Mammary epithelial cell (primary cell): ENCODE measurements at regions of chr6 and their contacts with region 1.

Region 1: GRCh38 chr6:35731736-35732532 is 4.9 kb upstream of the ARMC12 start:
- DNase-seq: peak; percentile 87
- H3K4me3 ChIP-seq: peak overlapping the region; percentile 45 to 54 (median 48)
- H3K27ac ChIP-seq: peak overlapping the region; percentile 83
- H3K4me1 ChIP-seq: peaks cover 69% of the 10 kb centered on the region
- H3K27me3 ChIP-seq: no peaks in the 10 kb centered on the region
- CTCF ChIP-seq: no peak

Region 2: DNA sequence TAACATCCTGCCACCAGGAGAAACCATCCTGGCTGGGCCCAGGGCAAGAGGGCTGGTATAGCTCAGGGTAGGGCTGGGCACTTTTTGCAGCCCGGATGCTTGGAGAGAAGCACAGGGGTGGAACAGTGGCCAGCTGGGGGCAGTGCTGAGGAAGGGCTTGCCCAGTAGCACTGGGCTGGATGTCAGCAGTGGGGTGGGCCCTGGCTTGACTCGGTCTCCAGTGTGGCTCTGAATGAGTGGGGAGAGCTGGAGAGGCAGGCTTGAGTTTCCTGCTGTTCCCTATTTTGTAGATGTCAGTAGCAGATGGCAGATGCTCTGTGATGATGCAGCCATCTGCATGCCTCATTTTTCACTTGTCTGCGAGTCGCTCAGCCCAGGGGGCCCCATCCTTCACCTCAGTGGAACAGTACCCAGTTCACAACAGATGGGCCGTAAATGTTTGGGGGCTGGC is 162.9 kb before region 1 on chr6:
- CTCF ChIA-PET with region 1: interaction called, 3 read pairs
- dilution Hi-C with region 1: no loop called
- in situ Hi-C with region 1: no loop called
- intact Hi-C with region 1: loop called (anchors 5 kb)
- DNase-seq: peak; percentile 23
- H3K4me3 ChIP-seq: no peak overlapping the region
- H3K27ac ChIP-seq: no peak overlapping the region
- H3K4me1 ChIP-seq: no peaks in the 10 kb centered on the region
- H3K27me3 ChIP-seq: no peaks in the 10 kb centered on the region
- CTCF ChIP-seq: peak; percentile 41 to 54

Region 3: GRCh38 chr6:35601331-35602132 is 130.4 kb before region 1 on chr6:
- CTCF ChIA-PET with region 1: interaction called, 4 read pairs
- dilution Hi-C with region 1: no loop called
- in situ Hi-C with region 1: no loop called
- intact Hi-C with region 1: loop called (anchors 5 kb)
- DNase-seq: peak; percentile 84
- H3K4me3 ChIP-seq: peak overlapping the region in 2 of 3 experiments; percentile 39 to 41
- H3K27ac ChIP-seq: peak overlapping the region; percentile 96
- H3K4me1 ChIP-seq: peaks cover 67% of the 10 kb centered on the region
- H3K27me3 ChIP-seq: no peaks in the 10 kb centered on the region
- CTCF ChIP-seq: no peak

Region 4: GRCh38 chr6:35688581-35689322 is 43.2 kb before region 1 on chr6 and contains the start of gene FKBP5:
- CTCF ChIA-PET with region 1: interaction called, 3 read pairs
- dilution Hi-C with region 1: loop called (anchors 5 kb)
- in situ Hi-C with region 1: loop called (anchors 5 kb)
- intact Hi-C with region 1: loop called (anchors 1 kb)
- DNase-seq: peak; percentile 89
- H3K4me3 ChIP-seq: peak within 1 kb of the TSS; percentile 65 to 94 (median 92)
- H3K27ac ChIP-seq: peak within 1 kb of the TSS; percentile 91
- H3K4me1 ChIP-seq: peaks cover 9% of the 10 kb centered on the region
- H3K27me3 ChIP-seq: no peaks in the 10 kb centered on the region
- CTCF ChIP-seq: no peak
- total RNA-seq, gene FKBP5: 60.7 to 97.9 TPM

Region 5: DNA sequence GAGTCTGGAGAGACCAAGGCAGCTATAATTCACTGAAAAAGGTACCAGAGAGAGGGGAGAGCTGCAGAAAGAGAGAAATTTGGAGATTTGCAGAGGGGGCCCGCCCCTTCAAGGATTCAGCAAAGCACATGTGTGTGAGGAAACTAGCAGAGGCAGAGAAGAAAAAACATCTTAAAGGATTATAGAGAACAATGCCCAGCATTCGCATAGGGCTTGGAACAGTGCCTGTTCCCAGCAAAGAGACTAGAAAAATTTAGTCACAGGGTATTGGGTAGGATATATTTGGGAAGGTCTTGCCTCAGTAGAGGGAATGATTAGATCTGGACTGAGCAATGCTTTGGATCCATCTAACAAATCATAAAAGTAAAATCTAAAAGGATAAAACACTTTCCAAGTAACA is 145.0 kb after region 1 on chr6:
- CTCF ChIA-PET with region 1: no interaction called
- dilution Hi-C with region 1: no loop called
- in situ Hi-C with region 1: no loop called
- intact Hi-C with region 1: no loop called
- DNase-seq: no peak
- H3K4me3 ChIP-seq: no peak overlapping the region
- H3K27ac ChIP-seq: no peak overlapping the region
- H3K4me1 ChIP-seq: no peaks in the 10 kb centered on the region
- H3K27me3 ChIP-seq: no peaks in the 10 kb centered on the region
- CTCF ChIP-seq: no peak